CD8-positive, alpha-beta memory T cell (primary cell): ENCODE measurements at regions of chr15 and their contacts with region 1.

Region 1: GRCh38 chr15:40477642-40478327 is 7.0 kb downstream of the CHST14 start:
- DNase-seq: no peak
- H3K4me3 ChIP-seq: no peak overlapping the region
- H3K4me3 Mint-ChIP-seq: no peak overlapping the region
- H3K27ac ChIP-seq: no peak overlapping the region
- H3K27ac Mint-ChIP-seq: no peak overlapping the region
- H3K4me1 ChIP-seq: no peaks in the 10 kb centered on the region
- H3K4me1 Mint-ChIP-seq: peaks cover under 1 to 3% (median 2%) of the 10 kb centered on the region in 3 donors
- H3K27me3 ChIP-seq: no peaks in the 10 kb centered on the region
- H3K27me3 Mint-ChIP-seq: peaks cover 3 to 23% of the 10 kb centered on the region in 2 donors

Region 2: DNA sequence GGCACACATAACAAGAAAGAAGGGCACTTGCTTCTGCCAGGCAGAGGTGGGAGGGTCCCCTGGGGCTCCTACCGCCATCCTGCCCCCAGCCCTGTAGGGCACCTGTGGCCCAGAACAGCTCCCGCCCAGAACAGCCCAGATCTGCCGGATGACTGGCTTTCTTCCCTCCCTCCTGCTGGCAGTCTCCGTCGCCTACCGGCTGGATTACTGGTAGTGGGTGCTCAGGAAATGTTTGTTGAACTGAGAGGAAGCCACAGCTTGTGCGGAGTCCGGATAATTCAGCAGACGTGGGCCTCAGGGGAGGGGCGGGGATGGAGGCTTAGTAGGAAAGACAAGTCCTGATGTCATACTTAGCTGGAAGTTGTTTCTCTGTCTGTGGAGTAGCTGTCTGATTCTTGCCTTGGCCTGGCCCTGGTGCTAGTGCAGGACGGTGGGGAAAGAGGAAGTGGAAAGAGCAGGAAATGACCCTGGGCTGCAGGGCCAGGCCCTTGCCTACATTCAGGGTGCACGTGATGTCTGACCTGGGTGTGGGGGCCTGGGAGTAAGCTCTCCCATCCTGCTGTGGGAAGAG is 143.8 kb before region 1 on chr15:
- CTCF ChIA-PET with region 1: no interaction called
- POLR2A ChIA-PET with region 1: no interaction called
- DNase-seq: peak in 1 of 5 donors; percentile 33
- H3K4me3 ChIP-seq: no peak overlapping the region
- H3K4me3 Mint-ChIP-seq: no peak overlapping the region
- H3K27ac ChIP-seq: peak overlapping the region; percentile 31
- H3K27ac Mint-ChIP-seq: no peak overlapping the region
- H3K4me1 ChIP-seq: peaks cover 23% of the 10 kb centered on the region
- H3K4me1 Mint-ChIP-seq: peaks cover 4 to 12% (median 7%) of the 10 kb centered on the region in 3 donors
- H3K27me3 ChIP-seq: no peaks in the 10 kb centered on the region
- H3K27me3 Mint-ChIP-seq: peaks cover 2 to 4% of the 10 kb centered on the region in 2 donors

Region 3: DNA sequence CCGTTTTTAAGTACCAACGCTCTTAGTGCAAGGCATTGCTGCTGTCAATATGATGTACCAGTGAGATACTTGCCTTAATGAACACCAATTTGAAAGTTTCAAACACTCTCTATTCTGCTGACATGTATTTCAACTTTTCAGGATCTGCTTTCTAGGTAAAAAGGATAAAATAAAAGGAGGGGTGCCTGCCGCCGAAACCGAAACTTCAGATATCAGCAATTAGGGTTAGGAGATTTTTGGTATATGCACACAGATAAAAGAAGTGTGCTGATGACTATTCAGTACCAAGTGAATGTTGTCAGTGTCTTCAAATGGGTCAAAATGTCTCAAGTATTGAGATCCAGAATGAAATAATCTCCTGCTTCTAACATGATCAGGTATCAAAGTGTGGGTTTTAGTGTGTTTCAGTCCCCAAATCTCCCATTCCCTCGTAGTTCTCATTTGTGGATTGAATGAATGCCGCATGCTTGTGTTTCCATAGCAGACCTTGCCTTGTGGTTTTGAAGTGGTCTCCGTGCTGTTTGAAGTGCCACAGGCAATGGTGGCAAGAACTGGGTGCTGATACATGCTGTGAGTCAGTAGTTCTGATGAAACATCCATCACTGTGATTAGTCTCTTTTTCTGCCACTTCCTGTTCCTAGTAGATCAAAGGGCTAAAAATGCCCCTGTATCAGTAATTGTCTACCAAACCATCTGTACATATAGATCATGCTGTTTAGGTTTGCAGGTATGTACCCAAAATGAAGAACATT is 15.5 kb after region 1 on chr15:
- CTCF ChIA-PET with region 1: no interaction called
- POLR2A ChIA-PET with region 1: no interaction called
- DNase-seq: peak in 2 of 5 donors; percentile 20 to 65
- H3K4me3 ChIP-seq: no peak overlapping the region
- H3K4me3 Mint-ChIP-seq: peak overlapping the region; percentile 4 to 58 (median 36)
- H3K27ac ChIP-seq: no peak overlapping the region
- H3K27ac Mint-ChIP-seq: peak overlapping the region; percentile 1 to 75 (median 36)
- H3K4me1 ChIP-seq: peaks cover 9% of the 10 kb centered on the region
- H3K4me1 Mint-ChIP-seq: peaks cover 15 to 17% (median 16%) of the 10 kb centered on the region in 3 donors
- H3K27me3 ChIP-seq: no peaks in the 10 kb centered on the region
- H3K27me3 Mint-ChIP-seq: peaks cover under 1 to 4% of the 10 kb centered on the region in 2 donors

Region 4: GRCh38 chr15:40731034-40731433 is 253.2 kb after region 1 on chr15:
- CTCF ChIA-PET with region 1: no interaction called
- POLR2A ChIA-PET with region 1: no interaction called
- DNase-seq: no peak
- H3K4me3 ChIP-seq: no peak overlapping the region
- H3K4me3 Mint-ChIP-seq: no peak overlapping the region
- H3K27ac ChIP-seq: no peak overlapping the region
- H3K27ac Mint-ChIP-seq: peak overlapping the region in 2 of 8 donors; percentile 52 to 79
- H3K4me1 ChIP-seq: no peaks in the 10 kb centered on the region
- H3K4me1 Mint-ChIP-seq: no peaks in the 10 kb centered on the region
- H3K27me3 ChIP-seq: no peaks in the 10 kb centered on the region
- H3K27me3 Mint-ChIP-seq: no peaks in the 10 kb centered on the region

Region 5: DNA sequence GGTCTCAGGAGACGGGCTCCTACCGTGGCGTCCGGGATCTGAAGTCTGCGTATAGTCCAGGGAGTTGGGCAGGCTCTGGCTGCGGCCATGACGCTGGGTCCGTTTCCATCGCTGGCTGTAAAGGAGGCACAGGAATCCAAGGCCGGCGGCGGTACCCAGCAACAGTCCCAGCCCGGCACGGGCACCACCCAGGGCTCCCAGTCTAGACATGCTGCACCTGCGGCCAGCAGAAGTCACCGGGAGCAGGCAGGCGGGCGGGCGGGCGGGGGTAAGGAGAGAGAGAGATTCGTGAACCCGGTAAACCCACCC is 276.7 kb after region 1 on chr15:
- CTCF ChIA-PET with region 1: no interaction called
- POLR2A ChIA-PET with region 1: no interaction called
- DNase-seq: peak in 1 of 5 donors; percentile 21
- H3K4me3 ChIP-seq: peak overlapping the region; percentile 75
- H3K4me3 Mint-ChIP-seq: peak overlapping the region; percentile 86 to 99 (median 93)
- H3K27ac ChIP-seq: peak overlapping the region; percentile 92
- H3K27ac Mint-ChIP-seq: peak overlapping the region; percentile 88 to 98 (median 95)
- H3K4me1 ChIP-seq: peaks cover 15% of the 10 kb centered on the region
- H3K4me1 Mint-ChIP-seq: peaks cover 19 to 33% (median 29%) of the 10 kb centered on the region in 3 donors
- H3K27me3 ChIP-seq: no peaks in the 10 kb centered on the region
- H3K27me3 Mint-ChIP-seq: no peaks in the 10 kb centered on the region

Region 6: GRCh38 chr15:41888662-41889253 is 1411.0 kb after region 1 on chr15:
- CTCF ChIA-PET with region 1: no interaction called
- POLR2A ChIA-PET with region 1: interaction called, 10 read pairs
- DNase-seq: no peak
- H3K4me3 ChIP-seq: no peak overlapping the region
- H3K4me3 Mint-ChIP-seq: peak overlapping the region in 3 of 7 donors; percentile 1 to 44 (median 19)
- H3K27ac ChIP-seq: no peak overlapping the region
- H3K27ac Mint-ChIP-seq: peak overlapping the region; percentile 63 to 92 (median 90)
- H3K4me1 ChIP-seq: peaks cover 37% of the 10 kb centered on the region
- H3K4me1 Mint-ChIP-seq: peaks cover 33 to 51% (median 41%) of the 10 kb centered on the region in 3 donors
- H3K27me3 ChIP-seq: no peaks in the 10 kb centered on the region
- H3K27me3 Mint-ChIP-seq: peaks cover 0 to 1% of the 10 kb centered on the region in 2 donors